ENCODE measurements at regions of chr7 and their contacts with region 1.

Region 1: DNA sequence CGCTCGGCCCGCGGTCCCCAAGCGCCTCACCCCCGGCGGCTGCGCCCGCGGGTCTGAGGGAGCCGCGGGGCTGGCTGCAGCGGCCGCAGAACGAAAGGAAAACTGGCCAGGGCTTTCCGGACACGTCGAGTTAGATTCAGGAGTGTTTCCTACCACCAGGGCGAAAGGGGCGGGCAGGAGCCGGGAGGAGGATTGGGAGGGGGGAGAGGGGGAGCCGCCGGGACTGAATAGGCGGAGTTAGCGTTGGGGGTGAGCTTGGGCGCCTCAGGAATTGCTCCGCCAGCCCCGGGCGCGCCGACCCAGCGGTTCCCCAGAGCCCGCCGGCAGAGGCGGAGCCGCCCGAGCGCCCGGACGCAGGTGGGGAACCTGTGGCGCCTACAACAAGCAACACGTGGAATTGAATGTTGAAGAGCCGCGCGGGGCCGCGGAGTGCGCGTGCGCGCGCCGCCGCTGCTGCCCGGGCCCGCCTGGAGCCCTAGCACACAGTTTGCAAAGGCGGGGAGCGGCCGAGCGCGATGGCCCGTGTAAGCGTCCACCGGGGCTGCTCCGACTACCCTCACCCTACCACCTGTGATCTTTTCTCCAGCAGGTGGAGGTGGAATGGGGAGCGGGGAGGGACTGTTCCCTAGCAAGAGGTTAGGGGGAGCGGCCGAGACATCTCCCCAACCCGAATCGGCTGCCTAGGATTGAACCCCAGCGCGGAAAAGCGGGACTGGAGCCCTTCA is at the start of gene CADPS2:
- DNase-seq: peak; percentile 71
- ATAC-seq: peak; percentile 85
- H3K4me3 ChIP-seq: peak within 1 kb of the TSS; percentile 73 to 76
- H3K27ac ChIP-seq: peak within 1 kb of the TSS; percentile 85
- H3K4me1 ChIP-seq: peaks cover 5 to 21% of the 10 kb centered on the region in 2 experiments; a peak in 3 of 4 replicates
- H3K27me3 ChIP-seq: no peaks in the 10 kb centered on the region
- CTCF ChIP-seq: peak in 1 of 3 experiments; percentile 27; a peak in 1 of 6 replicates
- POLR2A ChIP-seq: peak; percentile 35
- RAD21 ChIP-seq: no peak
- total RNA-seq, gene CADPS2: 7.5 TPM

Region 2: DNA sequence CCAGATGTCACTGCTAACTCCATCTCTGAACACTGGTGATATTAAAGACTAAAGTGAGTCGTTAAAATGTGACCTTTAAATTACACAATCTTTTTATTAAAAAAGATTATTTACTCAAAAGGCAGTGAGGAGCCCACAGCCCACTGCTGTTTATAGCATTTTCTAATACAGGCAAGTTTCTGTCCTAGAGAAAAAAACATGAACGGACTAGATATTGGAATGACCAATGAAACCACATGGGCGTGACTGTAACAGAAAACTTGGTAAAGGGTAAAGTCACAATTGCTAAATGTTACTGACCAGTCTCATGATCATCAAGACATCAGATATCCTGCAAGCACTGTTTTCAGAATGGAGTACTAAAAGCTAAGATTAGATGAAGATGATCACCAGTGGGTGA is 660.6 kb before region 1 on chr7:
- CTCF ChIA-PET with region 1: no interaction called
- POLR2A ChIA-PET with region 1: no interaction called
- RAD21 ChIA-PET with region 1: no interaction called
- intact Hi-C with region 1: loop called (anchors 10 kb)
- DNase-seq: no peak
- ATAC-seq: no peak
- H3K4me3 ChIP-seq: no peak overlapping the region
- H3K27ac ChIP-seq: no peak overlapping the region
- H3K4me1 ChIP-seq: no peaks in the 10 kb centered on the region
- H3K27me3 ChIP-seq: no peaks in the 10 kb centered on the region
- CTCF ChIP-seq: no peak
- POLR2A ChIP-seq: no peak
- RAD21 ChIP-seq: no peak